ENCODE measurements at regions of chr2 and their contacts with region 1.

Region 1: DNA sequence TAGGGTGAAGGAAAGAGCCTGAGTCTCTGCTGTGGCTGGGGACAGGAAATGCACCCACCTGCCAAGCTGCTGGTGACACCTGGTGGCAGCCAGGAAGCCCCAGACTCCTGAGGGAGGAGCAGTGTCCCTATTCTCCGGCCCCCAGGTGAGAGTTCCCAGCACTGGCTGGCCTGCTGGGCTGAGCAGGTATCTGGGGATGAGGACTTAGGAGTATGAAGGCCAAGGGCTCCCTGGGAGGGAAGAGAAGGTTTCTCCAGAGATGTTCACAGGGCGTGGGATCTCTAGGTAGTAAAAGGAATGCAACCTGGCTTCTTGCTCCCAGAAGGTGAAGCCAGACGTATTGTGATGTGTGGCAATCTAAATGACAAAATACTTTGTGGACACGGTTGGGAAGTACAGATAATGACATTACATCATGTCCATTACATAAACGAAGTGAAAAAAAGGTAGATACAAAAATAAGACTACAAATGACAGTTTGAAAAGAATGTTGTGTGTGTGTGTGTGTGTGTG is 75.8 kb upstream of the SLC1A4 start:
- DNase-seq: peak in 18 of 35 experiments; percentile 3 to 37 (median 15)
- ATAC-seq: peak in 3 of 4 experiments; percentile 38 to 59 (median 58)
- H3K4me3 ChIP-seq: no peak overlapping the region
- H3K4me3 Mint-ChIP-seq: no peak overlapping the region
- H3K27ac ChIP-seq: no peak overlapping the region
- H3K27ac Mint-ChIP-seq: no peak overlapping the region
- H3K4me1 ChIP-seq: peaks cover 0 to 12% of the 10 kb centered on the region in 2 experiments
- H3K4me1 Mint-ChIP-seq: peaks cover 8 to 14% (median 13%) of the 10 kb centered on the region in 3 donors
- H3K27me3 ChIP-seq: no peaks in the 10 kb centered on the region
- H3K27me3 Mint-ChIP-seq: peaks cover 0 to 4% of the 10 kb centered on the region in 2 donors

Region 2: GRCh38 chr2:63819765-63820717 is 1093.4 kb before region 1 on chr2:
- CTCF ChIA-PET with region 1: interaction called in 1 of 2 experiments, 14 read pairs
- POLR2A ChIA-PET with region 1: no interaction called
- DNase-seq: no peak
- ATAC-seq: no peak
- H3K4me3 ChIP-seq: no peak overlapping the region
- H3K4me3 Mint-ChIP-seq: no peak overlapping the region
- H3K27ac ChIP-seq: no peak overlapping the region
- H3K27ac Mint-ChIP-seq: no peak overlapping the region
- H3K4me1 ChIP-seq: no peaks in the 10 kb centered on the region
- H3K4me1 Mint-ChIP-seq: no peaks in the 10 kb centered on the region
- H3K27me3 ChIP-seq: peaks cover 0 to 2% of the 10 kb centered on the region in 2 experiments
- H3K27me3 Mint-ChIP-seq: peaks cover 6 to 9% of the 10 kb centered on the region in 2 donors

Region 3: DNA sequence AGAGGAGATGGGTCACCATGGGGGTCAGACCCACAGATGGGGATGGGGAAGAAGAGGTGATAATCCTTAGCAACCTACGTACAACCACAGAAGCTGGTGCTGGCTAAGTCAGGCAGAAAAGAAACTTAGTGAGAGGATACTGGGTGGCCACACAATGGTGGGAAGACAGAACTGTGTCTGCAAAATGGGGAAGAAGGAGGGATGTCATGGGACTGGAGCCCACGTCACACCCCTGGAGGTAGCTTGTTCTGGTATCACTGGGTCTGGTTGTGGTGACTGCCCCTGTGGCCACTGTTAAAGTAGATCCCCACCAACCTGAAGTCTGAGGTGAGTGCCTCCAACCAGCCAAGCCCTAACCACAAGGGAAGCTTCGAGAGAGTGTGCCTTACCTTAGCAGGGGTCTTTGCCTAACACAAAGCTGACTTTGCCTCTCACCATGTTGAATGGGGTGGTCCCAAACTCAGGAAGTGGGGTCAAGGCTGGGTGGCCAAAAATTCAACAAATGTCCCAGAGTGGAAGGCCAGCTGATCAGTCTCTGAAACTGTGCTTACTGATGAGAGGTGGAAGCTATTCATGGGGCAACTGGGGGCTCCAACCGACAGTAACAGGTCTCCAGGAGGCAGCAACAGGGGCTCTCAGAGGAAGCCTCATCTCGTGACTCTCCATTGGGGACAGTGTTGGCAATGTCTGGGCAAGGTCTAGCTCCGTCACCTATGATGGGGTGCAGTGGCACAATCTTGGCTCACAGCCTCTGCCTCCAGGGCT is 10.9 kb after region 1 on chr2:
- CTCF ChIA-PET with region 1: no interaction called
- POLR2A ChIA-PET with region 1: no interaction called
- DNase-seq: no peak
- ATAC-seq: no peak
- H3K4me3 ChIP-seq: no peak overlapping the region
- H3K4me3 Mint-ChIP-seq: no peak overlapping the region
- H3K27ac ChIP-seq: no peak overlapping the region
- H3K27ac Mint-ChIP-seq: no peak overlapping the region
- H3K4me1 ChIP-seq: no peaks in the 10 kb centered on the region
- H3K4me1 Mint-ChIP-seq: peaks cover 0 to under 1% (median 0%) of the 10 kb centered on the region in 3 donors
- H3K27me3 ChIP-seq: peaks cover 0 to 4% of the 10 kb centered on the region in 2 experiments
- H3K27me3 Mint-ChIP-seq: no peaks in the 10 kb centered on the region

Region 4: GRCh38 chr2:65031341-65032018 is 118.1 kb after region 1 on chr2:
- CTCF ChIA-PET with region 1: interaction called in 1 of 2 experiments, 12 read pairs
- POLR2A ChIA-PET with region 1: interaction called in 1 of 2 experiments, 5 read pairs
- DNase-seq: peak in 10 of 35 experiments; percentile 3 to 28 (median 14)
- ATAC-seq: peak; percentile 67 to 85 (median 74)
- H3K4me3 ChIP-seq: no peak overlapping the region
- H3K4me3 Mint-ChIP-seq: peak overlapping the region; percentile 2 to 68 (median 51)
- H3K27ac ChIP-seq: peak overlapping the region; percentile 64
- H3K27ac Mint-ChIP-seq: peak overlapping the region; percentile 81 to 84
- H3K4me1 ChIP-seq: peaks cover 19 to 28% of the 10 kb centered on the region in 2 experiments
- H3K4me1 Mint-ChIP-seq: peaks cover 23 to 32% (median 24%) of the 10 kb centered on the region in 3 donors
- H3K27me3 ChIP-seq: no peaks in the 10 kb centered on the region
- H3K27me3 Mint-ChIP-seq: no peaks in the 10 kb centered on the region

Region 5: DNA sequence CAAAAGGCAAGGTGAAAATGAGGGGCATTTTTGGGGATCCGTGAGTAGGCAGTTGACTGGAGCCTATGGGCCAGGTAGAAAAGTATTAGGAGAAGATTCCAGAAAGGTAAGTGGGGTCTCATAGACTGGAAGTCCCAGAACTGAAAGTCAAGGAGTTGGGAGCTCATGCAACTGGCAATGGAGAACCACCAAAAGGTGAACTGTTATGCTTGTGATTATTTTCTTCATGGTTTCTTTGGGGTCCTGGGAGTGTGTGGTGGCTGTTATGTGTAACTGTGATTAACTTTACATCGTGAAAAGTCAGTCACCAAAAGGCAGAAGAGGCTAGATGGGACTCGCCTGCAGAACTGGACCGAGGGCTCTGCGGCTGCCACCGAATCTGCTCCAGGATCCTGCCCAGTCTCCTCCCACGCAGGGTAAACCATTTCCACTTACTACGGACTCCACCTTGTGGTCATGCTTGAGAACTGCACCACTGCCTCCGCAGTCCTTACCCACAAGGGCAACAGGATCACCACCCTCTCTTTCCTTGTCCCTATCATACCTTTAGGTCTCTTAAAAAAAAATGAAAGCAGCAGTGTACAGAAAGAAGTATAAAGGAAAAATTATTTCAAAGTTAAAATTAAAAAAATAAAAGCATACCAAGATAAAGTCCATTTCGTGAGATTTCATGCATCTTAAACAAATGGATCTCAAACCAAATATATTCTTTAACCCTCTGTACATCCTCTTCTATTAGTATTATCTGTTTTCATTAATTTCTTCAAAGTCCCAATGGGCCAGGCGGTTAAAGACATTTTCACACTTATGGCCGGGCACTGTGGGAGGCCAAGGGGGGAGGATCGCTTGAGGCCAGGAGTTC is 127.2 kb after region 1 on chr2:
- CTCF ChIA-PET with region 1: interaction called, 5 to 15 read pairs
- POLR2A ChIA-PET with region 1: no interaction called
- DNase-seq: peak; percentile 32 to 87 (median 62)
- ATAC-seq: peak; percentile 95 to 99 (median 97)
- H3K4me3 ChIP-seq: no peak overlapping the region
- H3K4me3 Mint-ChIP-seq: no peak overlapping the region
- H3K27ac ChIP-seq: no peak overlapping the region
- H3K27ac Mint-ChIP-seq: no peak overlapping the region
- H3K4me1 ChIP-seq: peaks cover 3 to 5% of the 10 kb centered on the region in 2 experiments
- H3K4me1 Mint-ChIP-seq: peaks cover 7 to 20% (median 10%) of the 10 kb centered on the region in 3 donors
- H3K27me3 ChIP-seq: no peaks in the 10 kb centered on the region
- H3K27me3 Mint-ChIP-seq: no peaks in the 10 kb centered on the region

Region 6: DNA sequence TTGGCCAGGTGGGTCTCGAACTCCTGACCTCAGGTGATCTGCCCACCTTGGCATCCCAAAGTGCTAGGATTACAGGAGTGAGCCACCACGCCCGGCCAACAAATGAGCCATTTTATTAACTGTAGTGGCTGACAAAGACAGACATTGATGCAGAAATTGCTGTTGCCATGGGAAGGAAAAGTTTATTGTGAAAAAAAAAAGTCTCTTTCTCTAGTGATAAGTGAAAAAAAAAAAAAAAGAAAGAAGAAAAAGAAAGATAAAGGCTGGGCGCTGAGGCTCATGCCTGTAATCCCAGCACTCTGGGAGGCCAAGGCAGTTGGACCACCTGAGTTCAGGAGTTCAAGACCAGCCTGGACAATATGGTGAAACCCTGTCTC is 256.3 kb after region 1 on chr2:
- CTCF ChIA-PET with region 1: interaction called, 6 to 15 read pairs
- POLR2A ChIA-PET with region 1: interaction called in 1 of 2 experiments, 3 read pairs
- DNase-seq: no peak
- ATAC-seq: no peak
- H3K4me3 ChIP-seq: no peak overlapping the region
- H3K4me3 Mint-ChIP-seq: no peak overlapping the region
- H3K27ac ChIP-seq: no peak overlapping the region
- H3K27ac Mint-ChIP-seq: no peak overlapping the region
- H3K4me1 ChIP-seq: no peaks in the 10 kb centered on the region
- H3K4me1 Mint-ChIP-seq: peaks cover 0 to 5% (median 2%) of the 10 kb centered on the region in 3 donors
- H3K27me3 ChIP-seq: no peaks in the 10 kb centered on the region
- H3K27me3 Mint-ChIP-seq: no peaks in the 10 kb centered on the region